Activated CD4-positive, alpha-beta T cell treated with anti-CD3 and anti-CD28 coated beads for 36 hours (primary cell): ENCODE measurements at regions of chr9 and their contacts with region 1.

Region 1: GRCh38 chr9:114930056-114930812 is at the start of gene TNFSF8:
- DNase-seq: peak; percentile 90
- ATAC-seq: peak; percentile 85
- H3K4me3 Mint-ChIP-seq: peak within 1 kb of the TSS; percentile 85
- H3K27ac Mint-ChIP-seq: peak within 1 kb of the TSS; percentile 98
- H3K4me1 Mint-ChIP-seq: peaks cover 49% of the 10 kb centered on the region
- H3K27me3 Mint-ChIP-seq: no peaks in the 10 kb centered on the region
- total RNA-seq, gene TNFSF8: 42.3 to 48.2 TPM

Region 2: DNA sequence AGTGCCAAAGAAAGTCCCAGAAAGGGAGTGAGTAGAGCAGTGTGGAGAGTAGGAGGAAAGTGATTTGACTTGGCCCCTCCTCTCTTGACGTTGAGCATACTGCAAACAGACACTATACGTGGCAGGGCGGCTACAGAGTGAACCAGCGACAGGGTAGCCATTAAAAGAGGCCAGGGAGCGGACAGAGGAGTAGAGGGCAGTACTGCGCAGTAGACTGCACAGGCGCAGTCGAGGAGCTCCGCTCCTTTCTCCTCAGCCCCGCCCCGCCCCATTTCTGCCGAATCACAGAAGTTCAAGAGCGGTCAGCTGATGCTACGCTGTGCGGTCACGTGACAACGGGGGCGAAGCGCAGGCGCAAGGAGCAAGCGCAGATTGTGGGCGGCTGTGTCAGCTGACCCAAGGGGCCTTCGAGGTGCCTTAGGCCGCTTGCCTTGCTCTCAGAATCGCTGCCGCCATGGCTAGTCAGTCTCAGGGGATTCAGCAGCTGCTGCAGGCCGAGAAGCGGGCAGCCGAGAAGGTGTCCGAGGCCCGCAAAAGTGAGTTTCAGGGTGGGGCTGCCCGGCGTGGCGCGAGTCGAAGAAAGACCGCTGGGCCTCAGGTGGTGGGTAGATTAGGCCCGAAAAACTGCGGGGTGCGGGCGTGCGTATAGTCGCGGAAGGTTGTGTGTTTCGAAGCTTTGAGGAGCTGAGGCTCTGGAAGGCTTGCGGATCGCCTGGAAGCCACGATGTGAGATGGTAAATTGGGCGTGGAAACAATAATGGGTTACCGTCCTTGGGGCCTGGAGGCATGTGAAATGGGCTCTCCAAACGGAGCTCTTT is 342.6 kb before region 1 on chr9 and contains the start of gene ATP6V1G1:
- CTCF ChIA-PET with region 1: no interaction called
- POLR2A ChIA-PET with region 1: no interaction called
- intact Hi-C with region 1: loop called in 1 of 2 experiments (anchors 5 kb)
- DNase-seq: peak; percentile 100
- ATAC-seq: peak; percentile 96
- H3K4me3 Mint-ChIP-seq: peak within 1 kb of the TSS; percentile 99
- H3K27ac Mint-ChIP-seq: peak within 1 kb of the TSS; percentile 100
- H3K4me1 Mint-ChIP-seq: peaks cover 44% of the 10 kb centered on the region
- H3K27me3 Mint-ChIP-seq: no peaks in the 10 kb centered on the region
- total RNA-seq, gene ATP6V1G1: 33.8 to 37.7 TPM

Region 3: DNA sequence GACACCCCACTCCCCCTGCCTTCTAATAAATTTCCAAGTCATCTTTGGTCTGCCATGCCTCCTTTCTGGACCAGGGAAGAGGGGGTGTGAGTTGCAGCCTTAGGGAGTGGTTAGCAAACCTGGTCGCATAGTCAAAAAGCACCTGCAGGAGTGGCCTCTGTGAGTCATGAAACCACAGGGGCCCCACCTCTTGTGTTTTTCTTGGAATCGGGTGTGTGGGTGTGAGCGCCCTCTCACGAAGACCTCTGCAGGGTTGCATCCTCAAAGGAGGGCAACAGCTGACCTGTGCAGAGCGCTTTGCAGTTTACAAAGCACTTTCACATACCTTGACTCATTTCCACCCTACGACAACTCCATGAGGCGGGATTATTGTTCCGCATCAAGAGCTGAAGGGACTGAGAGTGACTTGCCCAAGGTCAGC is 211.4 kb before region 1 on chr9:
- CTCF ChIA-PET with region 1: interaction called, 3 read pairs
- POLR2A ChIA-PET with region 1: interaction called, 3 read pairs
- intact Hi-C with region 1: loop called in 1 of 2 experiments (anchors 1 kb)
- DNase-seq: peak; percentile 95
- ATAC-seq: peak; percentile 94
- H3K4me3 Mint-ChIP-seq: peak overlapping the region; percentile 15
- H3K27ac Mint-ChIP-seq: peak overlapping the region; percentile 96
- H3K4me1 Mint-ChIP-seq: peaks cover 56% of the 10 kb centered on the region
- H3K27me3 Mint-ChIP-seq: peaks cover 2% of the 10 kb centered on the region

Region 4: GRCh38 chr9:114914139-114914538 is 16.1 kb before region 1 on chr9:
- CTCF ChIA-PET with region 1: interaction called, 17 read pairs
- POLR2A ChIA-PET with region 1: interaction called, 9 read pairs
- intact Hi-C with region 1: loop called in 1 of 2 experiments (anchors 2 kb)
- DNase-seq: no peak
- ATAC-seq: no peak
- H3K4me3 Mint-ChIP-seq: no peak overlapping the region
- H3K27ac Mint-ChIP-seq: peak overlapping the region; percentile 39
- H3K4me1 Mint-ChIP-seq: peaks cover 75% of the 10 kb centered on the region
- H3K27me3 Mint-ChIP-seq: no peaks in the 10 kb centered on the region

Region 5: GRCh38 chr9:114968671-114969070 is 38.4 kb after region 1 on chr9:
- CTCF ChIA-PET with region 1: no interaction called
- POLR2A ChIA-PET with region 1: no interaction called
- intact Hi-C with region 1: loop called in 1 of 2 experiments (anchors 2 kb)
- DNase-seq: no peak
- ATAC-seq: peak; percentile 90
- H3K4me3 Mint-ChIP-seq: no peak overlapping the region
- H3K27ac Mint-ChIP-seq: no peak overlapping the region
- H3K4me1 Mint-ChIP-seq: peaks cover 28% of the 10 kb centered on the region
- H3K27me3 Mint-ChIP-seq: no peaks in the 10 kb centered on the region

Region 6: GRCh38 chr9:114981070-114981469 is 50.8 kb after region 1 on chr9:
- CTCF ChIA-PET with region 1: no interaction called
- POLR2A ChIA-PET with region 1: no interaction called
- intact Hi-C with region 1: no loop called
- DNase-seq: no peak
- ATAC-seq: no peak
- H3K4me3 Mint-ChIP-seq: no peak overlapping the region
- H3K27ac Mint-ChIP-seq: no peak overlapping the region
- H3K4me1 Mint-ChIP-seq: no peaks in the 10 kb centered on the region
- H3K27me3 Mint-ChIP-seq: no peaks in the 10 kb centered on the region

Region 7: DNA sequence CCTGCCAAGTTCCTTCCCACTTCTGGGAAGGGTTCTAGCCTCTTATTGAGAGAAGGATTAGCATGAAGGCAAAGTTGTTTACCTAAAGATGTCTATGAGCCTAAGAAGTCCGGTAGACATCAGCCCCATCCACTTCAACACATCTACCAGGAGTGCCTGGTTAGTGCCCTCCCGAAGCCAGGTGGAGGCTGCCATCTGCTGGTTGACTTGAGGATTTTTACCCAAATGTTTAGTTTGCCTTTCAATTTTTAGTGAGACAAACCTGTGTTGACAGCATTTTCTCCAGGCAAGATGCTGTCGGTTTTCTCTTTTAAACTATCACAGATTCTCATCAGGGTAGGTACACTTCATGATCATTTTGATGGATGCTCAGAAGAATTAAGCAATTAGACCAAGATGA is 83.8 kb after region 1 on chr9:
- CTCF ChIA-PET with region 1: interaction called, 44 read pairs
- POLR2A ChIA-PET with region 1: interaction called, 4 read pairs
- intact Hi-C with region 1: loop called (anchors 1 to 2 kb)
- DNase-seq: peak; percentile 89
- ATAC-seq: peak; percentile 89
- H3K4me3 Mint-ChIP-seq: no peak overlapping the region
- H3K27ac Mint-ChIP-seq: peak overlapping the region; percentile 58
- H3K4me1 Mint-ChIP-seq: peaks cover 46% of the 10 kb centered on the region
- H3K27me3 Mint-ChIP-seq: no peaks in the 10 kb centered on the region